Calu3 (cell line): ENCODE measurements at regions of chr2 and their contacts with region 1.

Region 1: GRCh38 chr2:229714736-229715541 is 584 bp upstream of the DNER start:
- DNase-seq: peak; percentile 63
- H3K4me3 Mint-ChIP-seq: peak overlapping the region; percentile 70
- H3K27ac Mint-ChIP-seq: no peak overlapping the region
- H3K4me1 Mint-ChIP-seq: no peaks in the 10 kb centered on the region
- H3K27me3 Mint-ChIP-seq: peaks cover 67% of the 10 kb centered on the region
- CTCF ChIP-seq: no peak

Region 2: GRCh38 chr2:229133155-229133772 is 581.7 kb before region 1 on chr2:
- CTCF ChIA-PET with region 1: no interaction called
- intact Hi-C with region 1: loop called (anchors 5 kb)
- DNase-seq: peak; percentile 41
- H3K4me3 Mint-ChIP-seq: no peak overlapping the region
- H3K27ac Mint-ChIP-seq: no peak overlapping the region
- H3K4me1 Mint-ChIP-seq: no peaks in the 10 kb centered on the region
- H3K27me3 Mint-ChIP-seq: no peaks in the 10 kb centered on the region
- CTCF ChIP-seq: peak; percentile 46

Region 3: GRCh38 chr2:229273723-229274338 is 441.1 kb before region 1 on chr2:
- CTCF ChIA-PET with region 1: no interaction called
- intact Hi-C with region 1: loop called (anchors 5 kb)
- DNase-seq: peak; percentile 60
- H3K4me3 Mint-ChIP-seq: peak overlapping the region; percentile 34
- H3K27ac Mint-ChIP-seq: no peak overlapping the region
- H3K4me1 Mint-ChIP-seq: peaks cover 22% of the 10 kb centered on the region
- H3K27me3 Mint-ChIP-seq: peaks cover 41% of the 10 kb centered on the region
- CTCF ChIP-seq: peak; percentile 68

Region 4: DNA sequence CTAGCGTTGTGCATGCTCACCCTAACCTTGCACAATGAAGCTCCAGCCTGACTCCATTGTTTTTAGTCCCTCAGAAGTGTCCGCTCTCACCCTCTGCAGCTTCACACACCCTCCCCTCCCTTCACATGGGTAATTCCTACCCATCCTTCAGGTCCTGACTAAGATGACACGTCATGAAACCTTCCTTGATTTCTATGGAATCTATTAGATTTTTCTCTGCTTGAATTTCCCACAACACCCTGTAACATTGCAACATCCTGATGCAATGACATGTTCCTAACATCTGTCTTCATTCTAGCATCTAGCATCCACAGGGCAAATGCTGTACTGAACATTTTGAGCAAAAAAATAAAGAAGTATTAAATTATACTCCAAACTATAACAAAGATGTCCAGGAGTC is 366.8 kb before region 1 on chr2:
- CTCF ChIA-PET with region 1: no interaction called
- intact Hi-C with region 1: loop called (anchors 5 kb)
- DNase-seq: no peak
- H3K4me3 Mint-ChIP-seq: no peak overlapping the region
- H3K27ac Mint-ChIP-seq: no peak overlapping the region
- H3K4me1 Mint-ChIP-seq: peaks cover 48% of the 10 kb centered on the region
- H3K27me3 Mint-ChIP-seq: no peaks in the 10 kb centered on the region
- CTCF ChIP-seq: no peak

Region 5: GRCh38 chr2:229431327-229431954 is 283.5 kb before region 1 on chr2:
- CTCF ChIA-PET with region 1: interaction called, 3 read pairs
- intact Hi-C with region 1: loop called (anchors 10 kb)
- DNase-seq: no peak
- H3K4me3 Mint-ChIP-seq: no peak overlapping the region
- H3K27ac Mint-ChIP-seq: no peak overlapping the region
- H3K4me1 Mint-ChIP-seq: peaks cover 5% of the 10 kb centered on the region
- H3K27me3 Mint-ChIP-seq: no peaks in the 10 kb centered on the region
- CTCF ChIP-seq: peak; percentile 19

Region 6: DNA sequence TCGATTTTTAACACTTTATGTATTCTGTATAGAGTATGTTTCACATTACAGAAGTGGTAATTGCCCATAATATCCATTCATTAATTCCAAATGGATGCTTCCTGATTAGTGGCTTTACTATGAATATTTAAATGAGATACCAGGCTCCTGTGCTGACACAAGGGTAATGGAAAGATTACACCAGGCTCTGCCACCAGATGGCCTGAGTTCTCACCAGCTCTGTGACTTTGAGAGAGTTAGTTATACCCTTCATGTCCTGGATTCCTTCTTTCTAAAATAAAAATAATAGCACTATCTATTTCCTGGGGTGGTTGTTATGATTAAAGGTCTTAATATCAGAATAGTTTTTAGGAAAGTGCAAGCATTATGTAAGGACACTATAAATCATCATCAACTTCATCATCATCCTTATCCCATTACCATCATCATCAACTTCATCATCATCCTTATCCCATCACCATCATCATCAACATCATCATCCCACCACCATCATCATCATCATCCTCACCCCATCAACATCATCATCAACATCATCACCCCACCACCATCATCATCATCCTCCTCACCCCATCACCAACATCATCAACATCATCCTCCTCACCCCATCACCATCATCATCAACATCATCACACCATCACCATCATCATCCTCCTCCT is 152.3 kb before region 1 on chr2:
- CTCF ChIA-PET with region 1: no interaction called
- intact Hi-C with region 1: no loop called
- DNase-seq: no peak
- H3K4me3 Mint-ChIP-seq: no peak overlapping the region
- H3K27ac Mint-ChIP-seq: no peak overlapping the region
- H3K4me1 Mint-ChIP-seq: no peaks in the 10 kb centered on the region
- H3K27me3 Mint-ChIP-seq: no peaks in the 10 kb centered on the region
- CTCF ChIP-seq: no peak

Region 7: DNA sequence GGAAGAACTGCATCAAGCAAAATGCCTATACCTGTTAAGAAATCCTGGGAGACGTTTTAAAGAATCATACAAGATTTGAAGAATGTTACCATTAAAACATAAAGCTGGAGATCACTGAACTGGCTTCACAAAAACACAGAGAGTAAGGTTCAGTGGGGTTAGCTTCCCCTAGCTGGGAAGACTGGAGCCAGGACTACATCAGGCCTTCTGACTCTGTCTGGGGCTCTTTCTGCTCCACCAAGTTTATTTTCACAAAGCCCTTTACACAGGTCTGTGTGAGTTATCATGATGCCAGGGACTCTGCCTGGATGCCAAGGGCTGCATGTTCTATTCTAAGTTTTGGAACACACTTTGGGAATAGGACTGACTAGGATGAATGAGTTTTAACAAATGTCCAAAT is 46.7 kb after region 1 on chr2:
- CTCF ChIA-PET with region 1: no interaction called
- intact Hi-C with region 1: no loop called
- DNase-seq: no peak
- H3K4me3 Mint-ChIP-seq: no peak overlapping the region
- H3K27ac Mint-ChIP-seq: no peak overlapping the region
- H3K4me1 Mint-ChIP-seq: no peaks in the 10 kb centered on the region
- H3K27me3 Mint-ChIP-seq: no peaks in the 10 kb centered on the region
- CTCF ChIP-seq: no peak